MCF 10A (cell line): ENCODE measurements at regions of chr6 and their contacts with region 1.

Region 1: DNA sequence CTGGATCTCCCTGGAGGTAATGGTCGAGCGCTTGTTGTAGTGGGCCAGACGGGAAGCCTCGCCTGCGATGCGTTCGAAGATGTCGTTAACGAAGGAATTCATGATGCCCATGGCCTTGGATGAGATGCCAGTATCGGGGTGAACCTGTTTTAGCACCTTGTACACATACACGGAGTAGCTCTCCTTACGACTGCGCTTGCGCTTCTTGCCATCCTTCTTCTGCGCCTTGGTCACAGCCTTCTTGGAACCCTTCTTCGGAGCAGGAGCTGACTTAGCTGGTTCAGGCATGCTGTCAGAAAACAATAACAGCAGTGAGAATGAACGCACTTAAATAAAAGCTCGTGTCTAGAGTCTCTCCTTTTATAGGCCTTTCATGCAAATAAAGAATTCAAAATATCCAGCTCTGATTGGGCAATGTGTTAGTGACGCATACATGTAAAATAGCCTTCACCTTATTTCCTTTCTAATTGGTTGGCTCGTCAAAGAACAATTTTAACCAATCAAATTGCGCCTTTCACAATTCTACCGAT is 129.2 kb downstream of the HFE start:
- DNase-seq: peak; percentile 98
- H3K4me3 Mint-ChIP-seq: no peak overlapping the region
- H3K27ac Mint-ChIP-seq: no peak overlapping the region
- H3K4me1 Mint-ChIP-seq: no peaks in the 10 kb centered on the region
- H3K27me3 Mint-ChIP-seq: no peaks in the 10 kb centered on the region
- CTCF ChIP-seq: no peak

Region 2: GRCh38 chr6:25556516-25556915 is 659.9 kb before region 1 on chr6:
- CTCF ChIA-PET with region 1: no interaction called
- POLR2A ChIA-PET with region 1: no interaction called
- intact Hi-C with region 1: no loop called
- DNase-seq: peak; percentile 83
- H3K4me3 Mint-ChIP-seq: no peak overlapping the region
- H3K27ac Mint-ChIP-seq: no peak overlapping the region
- H3K4me1 Mint-ChIP-seq: peaks cover 5% of the 10 kb centered on the region
- H3K27me3 Mint-ChIP-seq: no peaks in the 10 kb centered on the region
- CTCF ChIP-seq: peak; percentile 69

Region 3: GRCh38 chr6:26017632-26017966 is 198.8 kb before region 1 on chr6:
- CTCF ChIA-PET with region 1: no interaction called
- POLR2A ChIA-PET with region 1: interaction called, 25 read pairs
- intact Hi-C with region 1: no loop called
- DNase-seq: peak; percentile 93
- H3K4me3 Mint-ChIP-seq: peak overlapping the region; percentile 75
- H3K27ac Mint-ChIP-seq: peak overlapping the region; percentile 73
- H3K4me1 Mint-ChIP-seq: no peaks in the 10 kb centered on the region
- H3K27me3 Mint-ChIP-seq: no peaks in the 10 kb centered on the region
- CTCF ChIP-seq: peak; percentile 26

Region 4: GRCh38 chr6:26068036-26068435 is 148.4 kb before region 1 on chr6:
- CTCF ChIA-PET with region 1: no interaction called
- POLR2A ChIA-PET with region 1: no interaction called
- intact Hi-C with region 1: no loop called
- DNase-seq: no peak
- H3K4me3 Mint-ChIP-seq: no peak overlapping the region
- H3K27ac Mint-ChIP-seq: no peak overlapping the region
- H3K4me1 Mint-ChIP-seq: no peaks in the 10 kb centered on the region
- H3K27me3 Mint-ChIP-seq: no peaks in the 10 kb centered on the region
- CTCF ChIP-seq: no peak

Region 5: GRCh38 chr6:26103770-26104456 is 112.5 kb before region 1 on chr6:
- CTCF ChIA-PET with region 1: no interaction called
- POLR2A ChIA-PET with region 1: interaction called, 13 read pairs
- intact Hi-C with region 1: no loop called
- DNase-seq: peak; percentile 96
- H3K4me3 Mint-ChIP-seq: peak overlapping the region; percentile 75
- H3K27ac Mint-ChIP-seq: peak overlapping the region; percentile 92
- H3K4me1 Mint-ChIP-seq: peaks cover 11% of the 10 kb centered on the region
- H3K27me3 Mint-ChIP-seq: no peaks in the 10 kb centered on the region
- CTCF ChIP-seq: peak; percentile 41

Region 6: DNA sequence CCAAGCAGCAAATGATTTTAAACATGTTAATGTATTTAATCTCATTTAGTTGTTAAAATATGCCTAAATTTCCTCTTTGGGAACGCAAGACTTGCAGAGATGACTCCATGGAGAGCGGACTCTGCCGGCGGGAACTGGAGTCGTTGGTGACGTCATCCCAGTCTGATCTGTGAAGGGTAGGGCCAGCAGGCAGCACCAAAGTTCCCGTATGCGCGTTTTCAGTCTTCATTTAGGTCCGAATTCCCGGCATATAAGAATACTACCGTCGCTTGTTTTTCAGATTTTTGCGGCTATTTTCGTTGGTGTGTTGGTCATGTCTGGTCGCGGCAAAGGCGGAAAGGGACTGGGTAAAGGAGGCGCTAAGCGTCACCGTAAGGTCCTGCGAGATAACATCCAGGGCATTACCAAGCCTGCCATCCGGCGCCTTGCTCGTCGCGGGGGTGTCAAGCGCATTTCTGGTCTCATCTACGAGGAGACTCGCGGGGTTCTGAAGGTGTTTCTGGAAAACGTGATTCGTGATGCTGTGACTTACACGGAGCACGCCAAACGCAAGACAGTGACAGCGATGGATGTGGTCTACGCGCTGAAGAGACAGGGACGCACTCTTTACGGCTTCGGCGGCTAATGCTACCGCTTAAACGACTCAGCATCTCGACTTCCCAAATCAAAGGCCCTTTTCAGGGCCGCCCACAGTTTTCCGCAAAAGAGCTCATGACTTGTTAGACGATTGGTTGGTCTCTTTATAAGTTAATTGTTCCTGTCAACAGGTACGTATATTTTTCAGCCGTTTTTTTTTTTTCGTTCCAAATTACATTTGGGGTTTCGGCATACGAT is 11.9 kb before region 1 on chr6:
- CTCF ChIA-PET with region 1: interaction called, 20 read pairs
- POLR2A ChIA-PET with region 1: interaction called, 443 read pairs
- intact Hi-C with region 1: loop called (anchors 1 kb)
- DNase-seq: peak; percentile 98
- H3K4me3 Mint-ChIP-seq: no peak overlapping the region
- H3K27ac Mint-ChIP-seq: no peak overlapping the region
- H3K4me1 Mint-ChIP-seq: peaks cover 3% of the 10 kb centered on the region
- H3K27me3 Mint-ChIP-seq: no peaks in the 10 kb centered on the region
- CTCF ChIP-seq: no peak

Region 7: DNA sequence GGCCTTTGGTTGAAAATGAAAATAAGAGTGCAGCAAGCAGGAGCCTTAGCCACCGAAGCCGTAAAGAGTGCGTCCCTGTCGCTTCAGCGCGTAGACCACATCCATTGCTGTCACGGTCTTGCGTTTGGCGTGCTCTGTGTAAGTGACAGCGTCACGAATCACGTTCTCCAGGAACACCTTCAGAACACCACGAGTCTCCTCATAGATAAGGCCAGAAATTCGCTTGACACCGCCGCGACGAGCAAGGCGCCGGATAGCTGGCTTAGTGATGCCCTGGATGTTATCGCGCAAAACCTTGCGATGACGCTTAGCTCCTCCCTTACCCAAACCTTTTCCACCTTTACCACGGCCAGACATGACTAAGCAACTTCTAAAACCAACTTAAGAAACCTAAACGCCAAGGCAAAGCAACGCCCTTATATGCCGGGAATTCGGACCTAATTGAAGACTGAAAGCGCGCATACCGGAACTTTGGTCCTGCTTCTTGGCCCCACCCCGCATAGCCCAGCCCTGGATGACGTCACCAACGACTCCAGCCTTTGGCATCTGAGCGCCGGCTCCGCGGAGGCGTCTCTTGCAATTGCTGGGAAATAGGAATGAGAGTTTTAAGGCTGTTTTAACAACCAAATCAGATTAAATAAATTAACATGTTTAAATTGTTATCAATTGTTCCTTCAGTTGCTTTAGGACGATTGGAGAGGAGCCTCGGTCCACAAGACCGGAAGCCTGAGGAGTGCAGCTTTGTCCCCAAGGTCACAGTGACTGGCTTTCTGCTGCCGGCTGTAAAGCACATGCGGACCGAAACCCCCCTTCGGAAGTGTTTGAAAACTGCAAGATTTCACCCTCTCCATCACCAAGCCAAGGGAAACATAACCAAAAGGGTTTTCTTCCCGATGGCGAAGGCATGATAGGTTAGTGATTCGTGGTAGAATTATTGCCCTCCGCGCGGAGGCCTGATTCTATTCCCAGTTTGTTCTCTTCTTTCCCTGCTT is 69.0 kb after region 1 on chr6:
- CTCF ChIA-PET with region 1: no interaction called
- POLR2A ChIA-PET with region 1: interaction called, 125 read pairs
- intact Hi-C with region 1: loop called (anchors 1 kb)
- DNase-seq: peak; percentile 100
- H3K4me3 Mint-ChIP-seq: peak overlapping the region; percentile 91
- H3K27ac Mint-ChIP-seq: peak overlapping the region; percentile 92
- H3K4me1 Mint-ChIP-seq: peaks cover 10% of the 10 kb centered on the region
- H3K27me3 Mint-ChIP-seq: no peaks in the 10 kb centered on the region
- CTCF ChIP-seq: no peak

Region 8: DNA sequence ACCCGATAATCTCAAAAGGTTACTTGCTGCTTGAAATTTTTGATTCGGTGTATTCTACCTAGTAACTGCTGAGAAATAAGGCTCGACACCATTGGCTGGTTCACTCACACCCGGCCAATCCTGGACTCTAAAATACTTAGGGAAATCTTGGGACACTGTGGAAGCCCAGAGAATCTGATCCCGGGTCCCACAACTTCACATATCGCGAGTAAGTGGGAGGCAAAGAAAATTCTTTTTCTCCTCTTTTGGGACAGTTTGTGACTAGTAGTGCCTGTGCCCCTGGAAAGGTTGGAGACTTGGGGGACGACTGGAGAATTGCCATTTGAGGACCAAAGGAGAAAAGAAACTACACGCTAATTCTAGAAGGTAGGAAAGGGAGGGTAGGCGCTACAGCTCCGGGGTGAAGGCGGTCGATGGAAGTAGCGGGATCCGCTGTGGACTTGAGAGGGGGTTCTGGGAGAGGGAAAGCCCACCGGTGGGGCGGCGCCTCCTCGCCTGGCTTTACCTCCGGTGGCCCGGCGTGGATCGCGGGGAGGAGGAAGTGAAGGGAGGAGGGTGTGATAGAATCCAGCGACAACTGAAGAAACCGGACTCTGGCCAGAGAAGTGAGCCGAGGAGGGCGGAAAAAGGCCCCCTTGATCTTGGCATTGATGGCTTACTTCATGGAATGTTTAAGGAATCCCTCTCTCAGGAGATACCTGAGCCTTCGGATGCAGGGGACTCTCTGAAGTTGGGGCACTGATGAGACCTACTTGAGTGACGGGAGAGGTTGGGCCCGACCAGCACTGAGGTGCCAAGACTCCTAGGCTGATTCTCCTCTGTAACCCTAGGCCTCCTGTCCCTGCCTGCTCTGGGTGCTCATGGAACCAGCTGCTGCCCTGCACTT is 205.1 kb after region 1 on chr6:
- CTCF ChIA-PET with region 1: no interaction called
- POLR2A ChIA-PET with region 1: no interaction called
- intact Hi-C with region 1: no loop called
- DNase-seq: peak; percentile 93
- H3K4me3 Mint-ChIP-seq: no peak overlapping the region
- H3K27ac Mint-ChIP-seq: no peak overlapping the region
- H3K4me1 Mint-ChIP-seq: peaks cover 29% of the 10 kb centered on the region
- H3K27me3 Mint-ChIP-seq: no peaks in the 10 kb centered on the region
- CTCF ChIP-seq: no peak

Region 9: DNA sequence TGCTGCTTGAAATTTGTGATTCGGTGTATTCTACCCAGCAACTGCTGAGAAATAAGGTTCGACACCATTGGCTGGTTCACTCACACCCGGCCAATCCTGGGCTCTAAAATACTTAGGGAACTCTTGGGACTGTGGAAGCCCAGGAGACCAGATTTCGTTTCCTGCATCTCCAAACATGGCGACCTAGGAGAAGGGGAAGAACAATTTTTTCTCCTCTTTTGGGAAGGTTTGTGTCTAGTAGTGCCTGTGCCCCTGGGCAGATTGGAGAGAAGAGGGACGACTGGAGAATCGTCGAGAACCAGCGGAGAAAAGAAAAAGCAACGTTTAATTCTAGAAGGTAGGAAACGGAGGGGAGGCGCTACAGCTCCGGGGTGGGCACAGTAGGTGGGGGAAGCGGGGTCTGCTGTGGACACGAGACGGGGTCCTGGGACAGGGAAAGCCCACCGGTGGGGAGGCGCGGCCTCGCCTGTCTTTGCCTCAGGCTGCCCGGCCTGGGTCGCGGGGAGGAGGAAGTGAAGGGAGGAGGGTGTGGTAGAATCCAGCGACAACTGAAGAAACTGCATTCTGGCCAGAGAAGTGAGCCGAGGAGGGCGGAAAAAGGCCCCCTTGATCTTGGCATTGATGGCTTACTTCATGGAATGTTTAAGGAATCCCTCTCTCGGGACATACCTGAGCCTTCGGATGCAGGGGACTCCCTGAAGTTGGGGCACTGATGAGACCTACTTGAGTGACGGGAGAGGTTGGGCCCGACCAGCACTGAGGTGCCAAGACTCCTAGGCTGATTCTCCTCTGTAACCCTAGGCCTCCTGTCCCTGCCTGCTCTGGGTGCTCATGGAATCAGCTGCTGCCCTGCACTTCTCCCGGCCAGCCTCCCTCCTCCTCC is 241.6 kb after region 1 on chr6 and contains the start of gene BTN2A1:
- CTCF ChIA-PET with region 1: no interaction called
- POLR2A ChIA-PET with region 1: no interaction called
- intact Hi-C with region 1: no loop called
- DNase-seq: peak; percentile 94
- H3K4me3 Mint-ChIP-seq: peak within 1 kb of the TSS; percentile 85
- H3K27ac Mint-ChIP-seq: peak within 1 kb of the TSS; percentile 98
- H3K4me1 Mint-ChIP-seq: peaks cover 20% of the 10 kb centered on the region
- H3K27me3 Mint-ChIP-seq: no peaks in the 10 kb centered on the region
- CTCF ChIP-seq: no peak
- total RNA-seq, gene BTN2A1: 14.6 and 16.9 TPM in 2 replicates

Region 10: GRCh38 chr6:27132532-27133280 is 916.3 kb after region 1 on chr6:
- CTCF ChIA-PET with region 1: no interaction called
- POLR2A ChIA-PET with region 1: interaction called, 22 read pairs
- intact Hi-C with region 1: no loop called
- DNase-seq: peak; percentile 99
- H3K4me3 Mint-ChIP-seq: no peak overlapping the region
- H3K27ac Mint-ChIP-seq: no peak overlapping the region
- H3K4me1 Mint-ChIP-seq: peaks cover 11% of the 10 kb centered on the region
- H3K27me3 Mint-ChIP-seq: no peaks in the 10 kb centered on the region
- CTCF ChIP-seq: no peak

Region 11: DNA sequence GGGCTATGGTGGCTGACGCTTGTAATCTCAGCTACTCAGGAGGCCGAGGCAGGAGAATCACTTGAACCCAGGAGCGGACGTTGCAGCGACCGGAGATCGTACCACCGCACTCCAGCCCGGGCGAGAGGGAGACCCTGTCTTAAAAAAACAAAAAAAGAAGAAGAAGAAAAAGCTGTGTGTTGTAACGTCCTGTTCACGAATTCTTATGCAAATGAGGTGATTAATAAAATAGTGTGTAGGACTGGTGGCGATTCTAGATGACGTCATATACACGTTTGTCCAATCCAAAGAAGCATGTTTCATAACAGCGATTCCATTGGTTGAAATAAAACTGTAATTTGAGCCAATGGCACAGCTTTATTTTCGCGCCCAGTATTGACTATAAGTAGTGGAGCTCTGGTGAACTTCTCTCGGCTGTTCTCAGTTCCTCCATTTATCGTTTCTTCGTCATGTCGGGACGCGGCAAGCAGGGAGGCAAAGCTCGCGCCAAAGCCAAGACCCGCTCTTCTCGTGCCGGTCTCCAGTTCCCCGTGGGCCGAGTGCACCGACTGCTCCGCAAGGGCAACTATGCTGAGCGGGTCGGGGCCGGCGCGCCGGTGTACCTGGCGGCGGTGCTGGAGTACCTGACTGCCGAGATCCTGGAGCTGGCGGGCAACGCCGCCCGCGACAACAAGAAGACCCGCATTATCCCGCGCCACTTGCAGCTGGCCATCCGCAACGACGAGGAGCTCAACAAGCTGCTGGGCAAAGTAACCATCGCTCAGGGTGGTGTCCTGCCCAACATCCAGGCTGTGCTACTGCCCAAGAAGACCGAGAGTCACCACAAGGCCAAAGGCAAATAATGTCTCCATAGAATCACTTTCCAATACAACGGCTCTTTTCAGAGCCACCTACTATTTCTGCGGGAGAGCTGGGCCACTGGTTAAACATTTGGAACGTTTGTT is 1648.8 kb after region 1 on chr6:
- CTCF ChIA-PET with region 1: no interaction called
- POLR2A ChIA-PET with region 1: interaction called, 18 read pairs
- intact Hi-C with region 1: no loop called
- DNase-seq: peak; percentile 96
- H3K4me3 Mint-ChIP-seq: peak overlapping the region; percentile 91
- H3K27ac Mint-ChIP-seq: peak overlapping the region; percentile 97
- H3K4me1 Mint-ChIP-seq: no peaks in the 10 kb centered on the region
- H3K27me3 Mint-ChIP-seq: no peaks in the 10 kb centered on the region
- CTCF ChIP-seq: no peak